Activated CD4-positive, alpha-beta T cell treated with anti-CD3 and anti-CD28 coated beads for 36 hours (primary cell): ENCODE measurements at regions of chr3 and their contacts with region 1.

Region 1: GRCh38 chr3:1172644-1173043 is 79.8 kb downstream of the CNTN6 start:
- DNase-seq: no peak
- ATAC-seq: no peak
- H3K4me3 Mint-ChIP-seq: no peak overlapping the region
- H3K27ac Mint-ChIP-seq: no peak overlapping the region
- H3K4me1 Mint-ChIP-seq: no peaks in the 10 kb centered on the region
- H3K27me3 Mint-ChIP-seq: no peaks in the 10 kb centered on the region

Region 2: GRCh38 chr3:1147819-1148218 is 24.8 kb before region 1 on chr3:
- CTCF ChIA-PET with region 1: no interaction called
- POLR2A ChIA-PET with region 1: interaction called, 13 read pairs
- intact Hi-C with region 1: no loop called
- DNase-seq: no peak
- ATAC-seq: no peak
- H3K4me3 Mint-ChIP-seq: no peak overlapping the region
- H3K27ac Mint-ChIP-seq: no peak overlapping the region
- H3K4me1 Mint-ChIP-seq: no peaks in the 10 kb centered on the region
- H3K27me3 Mint-ChIP-seq: no peaks in the 10 kb centered on the region